ENCODE measurements at regions of chr11 and their contacts with region 1.

Region 1: GRCh38 chr11:65382033-65382807 is at the start of gene SLC25A45:
- DNase-seq: peak; percentile 90 to 93
- ATAC-seq: peak; percentile 89 to 96 (median 94)
- H3K4me3 ChIP-seq: peak within 1 kb of the TSS; percentile 27 to 74 (median 56)
- H3K27ac ChIP-seq: peak within 1 kb of the TSS; percentile 94 to 99 (median 98)
- H3K4me1 ChIP-seq: peaks cover 13 to 74% (median 47%) of the 10 kb centered on the region in 9 donors
- H3K27me3 ChIP-seq: no peaks in the 10 kb centered on the region
- CTCF ChIP-seq: peak; percentile 79 to 98 (median 86)
- total RNA-seq, gene SLC25A45: 4.6 to 12.2 (median 8.3) TPM

Region 2: GRCh38 chr11:65454696-65455456 is 72.7 kb after region 1 on chr11:
- intact Hi-C with region 1: loop called in 3 of 10 experiments (anchors 5 to 10 kb)
- DNase-seq: peak; percentile 89 to 93
- ATAC-seq: peak; percentile 91 to 98 (median 97)
- H3K4me3 ChIP-seq: peak overlapping the region; percentile 12 to 65 (median 50)
- H3K27ac ChIP-seq: peak overlapping the region; percentile 67 to 91 (median 85)
- H3K4me1 ChIP-seq: peaks cover 4 to 49% (median 24%) of the 10 kb centered on the region in 9 donors
- H3K27me3 ChIP-seq: no peaks in the 10 kb centered on the region
- CTCF ChIP-seq: peak in 3 of 9 donors; percentile 22 to 39 (median 27)

Region 3: GRCh38 chr11:65471410-65471762 is 89.2 kb after region 1 on chr11:
- intact Hi-C with region 1: loop called in 3 of 10 experiments (anchors 2 to 10 kb)
- DNase-seq: peak; percentile 81 to 85
- ATAC-seq: peak; percentile 85 to 94 (median 90)
- H3K4me3 ChIP-seq: peak overlapping the region in 9 of 10 donors; percentile 10 to 44 (median 33)
- H3K27ac ChIP-seq: peak overlapping the region; percentile 86 to 100 (median 98)
- H3K4me1 ChIP-seq: peaks cover 16 to 57% (median 41%) of the 10 kb centered on the region in 9 donors
- H3K27me3 ChIP-seq: no peaks in the 10 kb centered on the region
- CTCF ChIP-seq: peak; percentile 49 to 84 (median 72)

Region 4: GRCh38 chr11:65498977-65499716 is 116.9 kb after region 1 on chr11 and contains the start of gene MALAT1:
- intact Hi-C with region 1: no loop called
- DNase-seq: peak; percentile 91 to 96
- ATAC-seq: peak in 7 of 8 donors; percentile 16 to 37 (median 23)
- H3K4me3 ChIP-seq: peak within 1 kb of the TSS; percentile 68 to 88 (median 84)
- H3K27ac ChIP-seq: peak within 1 kb of the TSS; percentile 97 to 100 (median 99)
- H3K4me1 ChIP-seq: peaks cover 17 to 41% (median 30%) of the 10 kb centered on the region in 9 donors
- H3K27me3 ChIP-seq: no peaks in the 10 kb centered on the region
- CTCF ChIP-seq: no peak
- total RNA-seq, gene MALAT1: 4,742 to 8,462 (median 5,956) TPM

Measured in heart right ventricle (tissue), 16 donors.